ENCODE measurements at regions of chr3 and their contacts with region 1.

Region 1: DNA sequence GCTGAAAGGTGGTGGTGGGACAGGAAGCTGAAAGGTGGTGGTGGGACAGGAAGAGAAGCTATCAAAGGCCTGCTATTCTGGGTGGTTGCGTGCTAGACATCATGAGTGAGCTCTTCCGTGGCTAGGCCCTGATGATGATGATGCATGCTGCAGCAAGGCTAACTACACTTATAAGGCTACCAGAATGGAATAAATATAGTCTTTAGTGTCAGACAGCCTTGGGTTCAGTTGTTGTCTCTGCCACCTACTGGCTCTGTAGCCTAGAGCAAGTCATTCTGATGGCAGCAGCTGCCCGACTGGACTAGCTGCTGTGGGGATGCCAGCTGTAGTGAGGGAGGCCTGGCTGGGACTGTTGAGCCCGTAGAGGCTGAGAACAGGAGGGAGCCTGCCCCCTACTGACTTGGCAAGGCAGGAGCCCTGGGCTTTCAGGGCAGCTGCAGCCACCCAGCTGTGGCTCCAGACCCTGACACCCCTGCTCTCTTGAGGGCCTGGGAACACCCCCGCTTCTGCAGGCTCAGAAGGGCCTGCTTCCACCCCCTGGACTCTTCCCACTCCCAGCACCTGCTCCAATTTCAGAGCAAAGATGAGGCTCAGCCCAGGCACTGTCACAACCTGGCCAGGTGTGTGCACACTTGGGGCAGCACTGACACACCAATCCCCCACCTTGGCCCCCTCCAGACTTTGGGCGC is 21.4 kb upstream of the ZBED2 start:
- DNase-seq: peak; percentile 85
- ATAC-seq: peak; percentile 93
- H3K4me3 Mint-ChIP-seq: peak overlapping the region; percentile 9
- H3K27ac Mint-ChIP-seq: peak overlapping the region; percentile 93
- H3K4me1 Mint-ChIP-seq: peaks cover 73% of the 10 kb centered on the region
- H3K27me3 Mint-ChIP-seq: no peaks in the 10 kb centered on the region

Region 2: GRCh38 chr3:111539351-111540331 is 76.9 kb before region 1 on chr3:
- CTCF ChIA-PET with region 1: interaction called, 13 read pairs
- DNase-seq: peak; percentile 86
- ATAC-seq: peak; percentile 68
- H3K4me3 Mint-ChIP-seq: peak overlapping the region; percentile 71
- H3K27ac Mint-ChIP-seq: no peak overlapping the region
- H3K4me1 Mint-ChIP-seq: peaks cover 50% of the 10 kb centered on the region
- H3K27me3 Mint-ChIP-seq: no peaks in the 10 kb centered on the region

Region 3: DNA sequence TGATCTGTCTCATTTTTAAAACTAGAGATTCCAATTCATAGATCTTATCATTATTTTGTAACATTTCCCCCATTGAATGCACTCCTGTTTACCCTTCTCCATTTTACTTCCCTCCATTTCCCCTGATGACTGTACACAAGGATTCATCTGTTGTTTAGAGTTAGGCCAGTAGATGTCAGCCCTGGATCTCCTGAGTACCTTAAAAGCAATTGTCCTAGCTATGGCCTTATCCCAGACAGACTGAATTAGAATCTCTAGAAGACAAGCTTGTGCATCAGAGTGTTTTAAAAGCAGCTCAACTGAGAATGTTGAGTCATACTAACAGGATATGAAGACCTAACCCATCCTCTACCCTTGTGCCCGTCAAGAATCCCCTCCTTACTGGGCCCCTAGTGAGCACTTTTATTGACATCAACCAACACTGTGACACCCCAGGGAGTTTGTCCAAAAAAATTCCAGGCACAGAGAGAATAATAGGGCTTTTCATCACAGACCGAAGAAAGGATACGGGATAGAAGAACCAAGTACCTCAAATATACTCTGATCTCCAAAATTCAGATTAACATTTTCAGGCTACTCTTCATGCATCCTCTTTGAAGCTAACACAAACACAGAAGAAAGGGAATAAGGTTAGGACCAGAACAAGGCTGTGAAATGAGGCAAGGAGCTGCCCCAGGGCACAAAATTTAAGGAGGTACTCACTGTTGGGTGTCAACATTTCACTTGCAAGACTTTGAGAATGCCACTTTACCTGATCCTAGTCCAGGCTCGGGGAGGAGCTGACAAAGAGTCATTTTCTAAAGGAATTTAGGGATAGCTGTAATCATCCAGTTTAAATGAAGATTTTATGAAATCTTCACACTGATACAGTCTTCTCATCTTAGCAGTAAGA is 38.5 kb before region 1 on chr3:
- CTCF ChIA-PET with region 1: interaction called, 56 read pairs
- DNase-seq: no peak
- ATAC-seq: peak; percentile 92
- H3K4me3 Mint-ChIP-seq: no peak overlapping the region
- H3K27ac Mint-ChIP-seq: peak overlapping the region; percentile 69
- H3K4me1 Mint-ChIP-seq: peaks cover 73% of the 10 kb centered on the region
- H3K27me3 Mint-ChIP-seq: no peaks in the 10 kb centered on the region

Region 4: GRCh38 chr3:111594205-111594604 is 22.4 kb before region 1 on chr3:
- CTCF ChIA-PET with region 1: interaction called, 21 read pairs
- DNase-seq: no peak
- ATAC-seq: peak; percentile 27
- H3K4me3 Mint-ChIP-seq: peak overlapping the region; percentile 83
- H3K27ac Mint-ChIP-seq: peak overlapping the region; percentile 87
- H3K4me1 Mint-ChIP-seq: peaks cover 84% of the 10 kb centered on the region
- H3K27me3 Mint-ChIP-seq: no peaks in the 10 kb centered on the region

Region 5: GRCh38 chr3:111668912-111669488 is 52.4 kb after region 1 on chr3:
- CTCF ChIA-PET with region 1: interaction called, 26 read pairs
- DNase-seq: no peak
- ATAC-seq: peak; percentile 40
- H3K4me3 Mint-ChIP-seq: no peak overlapping the region
- H3K27ac Mint-ChIP-seq: peak overlapping the region; percentile 75
- H3K4me1 Mint-ChIP-seq: peaks cover 84% of the 10 kb centered on the region
- H3K27me3 Mint-ChIP-seq: no peaks in the 10 kb centered on the region

Region 6: GRCh38 chr3:112247900-112248299 is 631.3 kb after region 1 on chr3:
- CTCF ChIA-PET with region 1: no interaction called
- DNase-seq: no peak
- ATAC-seq: no peak
- H3K4me3 Mint-ChIP-seq: no peak overlapping the region
- H3K27ac Mint-ChIP-seq: no peak overlapping the region
- H3K4me1 Mint-ChIP-seq: peaks cover 6% of the 10 kb centered on the region
- H3K27me3 Mint-ChIP-seq: peaks cover 7% of the 10 kb centered on the region